MCF 10A (cell line): ENCODE measurements at regions of chr15 and their contacts with region 1.

Region 1: DNA sequence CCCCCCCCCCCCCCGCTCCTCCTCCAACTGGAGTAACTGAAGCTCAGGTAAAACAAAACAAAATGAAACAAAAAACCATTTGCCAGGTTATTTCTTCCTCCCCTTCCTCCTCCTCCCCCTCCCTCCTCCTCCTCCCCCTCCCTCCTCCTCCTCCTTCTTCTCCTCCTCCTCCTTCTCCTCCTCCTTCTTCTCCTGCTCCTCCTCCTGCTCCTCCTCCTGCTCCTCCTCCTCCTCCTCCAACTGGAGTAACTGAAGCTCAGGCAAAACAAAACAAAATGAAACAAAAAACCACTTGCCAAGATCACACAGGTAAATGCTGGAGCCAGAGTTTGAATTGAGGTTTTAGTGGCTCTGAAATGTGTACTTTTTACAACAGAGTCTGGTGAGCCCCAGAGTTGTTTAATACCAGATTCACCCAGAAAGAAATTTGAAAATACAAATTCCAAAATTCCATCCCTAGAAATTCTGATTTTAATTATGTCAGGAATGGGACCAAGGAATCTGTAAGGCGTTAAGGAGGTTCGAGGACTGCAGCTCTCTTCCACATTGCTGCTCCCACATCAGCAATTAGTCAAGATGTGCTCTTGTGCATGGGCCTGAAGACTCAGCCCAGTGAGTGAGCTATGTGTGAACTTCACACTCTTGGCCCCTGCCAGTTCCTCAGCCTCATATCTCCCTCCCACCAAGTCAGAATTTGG is 31.4 kb upstream of the ZNF770 start:
- DNase-seq: peak; percentile 70
- H3K4me3 Mint-ChIP-seq: peak overlapping the region; percentile 66
- H3K27ac Mint-ChIP-seq: peak overlapping the region; percentile 81
- H3K4me1 Mint-ChIP-seq: peaks cover 16% of the 10 kb centered on the region
- H3K27me3 Mint-ChIP-seq: no peaks in the 10 kb centered on the region
- CTCF ChIP-seq: no peak

Region 2: GRCh38 chr15:35007394-35007793 is 12.1 kb before region 1 on chr15:
- CTCF ChIA-PET with region 1: interaction called, 10 read pairs
- POLR2A ChIA-PET with region 1: interaction called, 12 read pairs
- intact Hi-C with region 1: no loop called
- DNase-seq: no peak
- H3K4me3 Mint-ChIP-seq: no peak overlapping the region
- H3K27ac Mint-ChIP-seq: no peak overlapping the region
- H3K4me1 Mint-ChIP-seq: no peaks in the 10 kb centered on the region
- H3K27me3 Mint-ChIP-seq: no peaks in the 10 kb centered on the region
- CTCF ChIP-seq: no peak

Region 3: GRCh38 chr15:35633677-35634076 is 614.1 kb after region 1 on chr15:
- CTCF ChIA-PET with region 1: no interaction called
- POLR2A ChIA-PET with region 1: no interaction called
- intact Hi-C with region 1: no loop called
- DNase-seq: no peak
- H3K4me3 Mint-ChIP-seq: no peak overlapping the region
- H3K27ac Mint-ChIP-seq: no peak overlapping the region
- H3K4me1 Mint-ChIP-seq: peaks cover 12% of the 10 kb centered on the region
- H3K27me3 Mint-ChIP-seq: no peaks in the 10 kb centered on the region
- CTCF ChIP-seq: no peak